Gastrocnemius medialis (tissue), 4 donors: ENCODE measurements at regions of chr9 and their contacts with region 1.

Region 1: DNA sequence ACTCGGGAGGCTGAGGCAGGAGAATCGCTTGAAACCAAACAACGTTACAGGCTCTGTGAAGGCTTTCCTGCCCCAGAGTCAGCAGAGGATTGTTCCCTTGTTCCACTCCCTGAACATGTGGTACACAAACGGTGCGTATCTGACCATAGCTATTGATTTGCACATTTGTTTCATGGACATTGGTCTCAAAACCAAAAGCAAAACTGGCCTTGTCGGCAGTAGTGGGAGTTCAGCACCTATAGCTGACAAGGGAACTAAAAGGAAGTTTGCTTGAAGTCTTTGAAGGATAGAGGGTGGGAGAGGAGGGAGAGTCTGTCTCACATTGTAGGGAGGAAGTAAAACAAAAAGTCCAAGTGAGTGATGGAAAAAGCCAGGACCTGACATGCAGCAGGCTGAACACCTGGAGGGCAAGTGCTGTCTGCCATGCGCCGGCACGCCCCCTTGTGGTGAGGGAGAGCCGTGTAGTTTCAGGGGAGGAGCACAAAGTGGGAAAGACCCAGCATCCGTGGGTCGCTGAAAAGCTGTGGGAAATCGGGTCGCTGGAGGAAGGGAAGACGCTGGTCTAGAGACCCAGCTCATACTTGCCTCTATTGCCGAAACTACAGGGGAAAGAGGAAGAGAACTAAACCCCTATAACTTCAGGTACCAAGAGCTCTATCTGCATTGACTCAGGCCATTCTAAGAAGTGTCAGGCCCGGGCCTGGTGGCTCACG is 58.0 kb downstream of the RAD23B start:
- DNase-seq: peak; percentile 53 to 72
- ATAC-seq: peak; percentile 21 to 61
- H3K4me3 ChIP-seq: no peak overlapping the region
- H3K27ac ChIP-seq: no peak overlapping the region
- H3K4me1 ChIP-seq: peaks cover 28 to 34% of the 10 kb centered on the region in 2 donors
- H3K27me3 ChIP-seq: no peaks in the 10 kb centered on the region
- CTCF ChIP-seq: peak; percentile 71 to 95 (median 90)
- POLR2A ChIP-seq: no peak

Region 2: GRCh38 chr9:105883847-105884246 is 1457.2 kb before region 1 on chr9:
- in situ Hi-C with region 1: no loop called
- intact Hi-C with region 1: no loop called
- DNase-seq: no peak
- ATAC-seq: no peak
- H3K4me3 ChIP-seq: no peak overlapping the region
- H3K27ac ChIP-seq: no peak overlapping the region
- H3K4me1 ChIP-seq: no peaks in the 10 kb centered on the region
- H3K27me3 ChIP-seq: no peaks in the 10 kb centered on the region
- CTCF ChIP-seq: no peak
- POLR2A ChIP-seq: no peak

Region 3: DNA sequence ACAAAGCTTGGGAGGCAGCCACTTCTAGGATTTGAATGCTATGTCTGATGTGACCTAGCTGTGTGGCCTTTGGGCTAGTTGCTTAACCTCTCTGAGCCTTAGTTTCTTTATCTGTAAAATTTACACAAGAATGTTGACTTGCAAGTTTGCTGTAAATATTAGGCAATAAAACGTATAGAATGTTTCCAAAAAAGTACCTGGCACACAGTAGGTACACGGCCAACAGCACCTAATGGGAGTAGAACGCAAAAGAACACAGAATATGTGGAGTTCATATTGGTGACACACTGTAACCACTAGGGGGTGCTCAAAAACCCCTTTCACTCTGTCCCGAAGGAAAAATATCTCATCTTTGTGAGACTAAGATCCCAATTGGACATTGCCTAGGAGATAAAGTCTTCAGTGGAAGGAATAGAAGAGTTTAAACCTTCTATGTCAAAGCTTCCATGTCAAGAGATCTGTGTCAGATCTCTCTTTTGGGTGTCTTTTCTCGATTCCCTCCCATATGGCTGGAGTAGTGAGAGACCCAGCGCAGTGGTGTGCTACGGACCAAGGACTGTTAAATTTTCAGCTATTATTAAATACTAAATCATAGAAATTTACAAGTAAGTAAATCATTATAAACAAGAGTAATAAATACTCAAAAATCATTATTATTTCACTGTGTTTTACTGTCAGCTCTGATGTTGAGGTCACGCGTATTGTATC is 203.4 kb before region 1 on chr9:
- in situ Hi-C with region 1: no loop called
- intact Hi-C with region 1: loop called (anchors 5 kb)
- DNase-seq: no peak
- ATAC-seq: peak; percentile 65 to 75
- H3K4me3 ChIP-seq: no peak overlapping the region
- H3K27ac ChIP-seq: no peak overlapping the region
- H3K4me1 ChIP-seq: peaks cover 6 to 8% of the 10 kb centered on the region in 2 donors
- H3K27me3 ChIP-seq: no peaks in the 10 kb centered on the region
- CTCF ChIP-seq: peak; percentile 52 to 70 (median 65)
- POLR2A ChIP-seq: no peak

Region 4: GRCh38 chr9:107243751-107244150 is 97.3 kb before region 1 on chr9:
- in situ Hi-C with region 1: loop called in 2 of 4 experiments (anchors 10 to 25 kb)
- intact Hi-C with region 1: loop called (anchors 1 kb)
- DNase-seq: no peak
- ATAC-seq: peak; percentile 45 to 52
- H3K4me3 ChIP-seq: no peak overlapping the region
- H3K27ac ChIP-seq: no peak overlapping the region
- H3K4me1 ChIP-seq: peaks cover 6 to 11% of the 10 kb centered on the region in 2 donors
- H3K27me3 ChIP-seq: no peaks in the 10 kb centered on the region
- CTCF ChIP-seq: no peak
- POLR2A ChIP-seq: no peak

Region 5: DNA sequence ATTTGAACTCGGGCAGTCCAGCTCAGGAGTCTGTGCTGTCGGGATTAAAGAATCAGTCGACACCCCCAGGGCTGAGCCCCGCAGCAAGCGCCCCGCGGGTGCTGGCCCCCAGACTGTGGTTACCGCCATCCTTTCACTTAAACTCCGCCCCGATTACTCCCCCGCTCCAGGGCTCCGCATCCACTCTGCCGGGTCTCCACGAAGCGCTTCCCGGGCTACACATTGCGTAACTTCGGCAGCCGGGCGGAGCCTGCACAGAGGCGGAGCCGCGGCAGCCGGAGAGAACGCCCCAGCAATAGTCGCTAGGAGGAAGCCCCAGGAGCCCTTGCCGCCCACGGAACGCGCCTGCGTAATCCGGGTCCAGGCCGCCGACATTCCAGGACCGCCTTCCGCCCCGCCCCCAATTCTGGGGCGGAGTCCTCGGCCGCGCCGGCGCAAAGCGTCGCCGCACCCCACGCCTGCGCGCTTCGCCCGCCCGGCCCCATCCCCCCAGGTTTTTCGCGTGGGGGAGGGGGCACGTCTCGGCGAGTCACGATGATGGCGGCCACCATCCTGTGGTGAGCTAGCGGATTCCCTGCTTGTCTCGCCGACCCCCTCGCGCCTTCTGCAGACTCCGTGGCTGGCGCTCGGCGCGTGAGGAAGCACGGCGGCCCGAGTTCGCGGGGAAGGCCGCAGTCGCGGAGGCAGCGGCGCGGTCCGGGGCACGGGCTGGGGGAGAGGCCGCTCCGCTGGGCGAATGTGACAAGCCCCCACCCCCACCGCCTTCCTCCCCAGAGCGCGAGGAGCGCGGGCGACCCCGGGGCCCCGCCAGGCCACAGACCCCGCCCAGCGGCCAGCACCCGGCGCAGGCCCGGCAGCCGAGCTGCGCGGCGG is 58.1 kb before region 1 on chr9 and contains the start of gene RAD23B:
- in situ Hi-C with region 1: no loop called
- intact Hi-C with region 1: loop called (anchors 2 kb)
- DNase-seq: peak; percentile 97 to 98
- ATAC-seq: peak; percentile 78 to 79
- H3K4me3 ChIP-seq: peak within 1 kb of the TSS; percentile 73 to 91 (median 86)
- H3K27ac ChIP-seq: peak within 1 kb of the TSS; percentile 90 to 99 (median 97)
- H3K4me1 ChIP-seq: peaks cover 30 to 33% of the 10 kb centered on the region in 2 donors
- H3K27me3 ChIP-seq: no peaks in the 10 kb centered on the region
- CTCF ChIP-seq: peak in 2 of 5 experiments; percentile 3 to 25
- POLR2A ChIP-seq: peak; percentile 97 to 98
- total RNA-seq, gene RAD23B: 163 to 249 (median 188) TPM

Region 6: GRCh38 chr9:107309271-107309670 is 31.8 kb before region 1 on chr9:
- in situ Hi-C with region 1: no loop called
- intact Hi-C with region 1: no loop called
- DNase-seq: no peak
- ATAC-seq: no peak
- H3K4me3 ChIP-seq: no peak overlapping the region
- H3K27ac ChIP-seq: no peak overlapping the region
- H3K4me1 ChIP-seq: peaks cover 10 to 22% of the 10 kb centered on the region in 2 donors
- H3K27me3 ChIP-seq: no peaks in the 10 kb centered on the region
- CTCF ChIP-seq: no peak
- POLR2A ChIP-seq: no peak